ENCODE measurements at regions of chr16 and their contacts with region 1.

Region 1: GRCh38 chr16:88737298-88738150 is 31.2 kb downstream of the CTU2 start:
- DNase-seq: peak; percentile 77
- H3K4me3 ChIP-seq: no peak overlapping the region
- H3K27ac ChIP-seq: no peak overlapping the region
- H3K4me1 ChIP-seq: no peaks in the 10 kb centered on the region
- H3K27me3 ChIP-seq: no peaks in the 10 kb centered on the region
- CTCF ChIP-seq: peak; percentile 94

Region 2: GRCh38 chr16:88706288-88706964 is 31.1 kb before region 1 on chr16 and contains the starts of genes CTU2 and RNF166:
- CTCF ChIA-PET with region 1: interaction called, 18 read pairs
- POLR2A ChIA-PET with region 1: no interaction called
- intact Hi-C with region 1: no loop called
- DNase-seq: peak; percentile 91
- H3K4me3 ChIP-seq: peak within 1 kb of the TSS; percentile 94
- H3K27ac ChIP-seq: peak within 1 kb of the TSS; percentile 76
- H3K4me1 ChIP-seq: peaks cover 30% of the 10 kb centered on the region
- H3K27me3 ChIP-seq: no peaks in the 10 kb centered on the region
- CTCF ChIP-seq: no peak
- total RNA-seq, gene CTU2: 45.0 and 47.5 TPM in 2 replicates
- total RNA-seq, gene RNF166: 32.3 and 36.3 TPM in 2 replicates

Region 3: DNA sequence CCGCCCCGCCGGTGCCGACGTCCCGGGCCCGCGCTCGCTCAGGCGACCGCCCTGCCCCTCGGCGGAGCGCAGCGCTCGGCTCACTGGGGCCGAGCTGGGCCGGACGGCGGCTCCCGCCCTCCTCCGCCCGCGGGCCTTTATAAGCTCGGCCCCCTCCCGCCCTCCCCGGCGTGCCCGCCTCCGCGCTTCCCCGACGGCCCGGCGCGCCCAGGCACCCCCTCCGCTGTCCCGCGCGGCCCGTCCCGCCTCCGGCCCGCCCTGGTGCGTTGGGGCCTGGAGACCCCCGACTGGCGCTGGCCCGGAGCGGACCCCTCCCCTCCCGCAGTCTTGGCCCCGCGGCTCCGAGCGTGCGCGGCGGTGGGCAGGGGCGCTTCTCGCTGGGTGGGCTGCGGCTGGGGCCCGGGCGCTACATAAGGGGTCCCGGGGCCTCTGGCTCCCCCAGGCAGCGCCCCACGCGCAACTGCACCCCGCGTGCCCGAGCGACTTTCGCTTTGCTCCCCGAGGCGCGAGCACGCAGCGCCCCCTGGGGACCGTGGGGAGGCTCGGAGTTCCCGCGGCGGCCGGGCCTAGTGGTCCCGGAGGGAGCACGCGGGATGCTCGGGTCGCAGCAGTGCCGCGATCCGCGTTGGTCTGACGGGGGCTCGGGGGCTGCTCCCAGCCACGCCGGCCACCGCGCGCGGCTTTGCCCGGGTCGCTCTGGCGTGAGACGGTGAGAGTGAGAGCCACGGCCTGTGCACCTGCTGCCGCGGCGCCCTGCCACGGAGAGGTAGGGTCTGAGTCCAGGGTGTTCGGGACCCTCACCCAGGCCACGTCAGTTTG is 47.8 kb after region 1 on chr16 and contains the start of gene PIEZO1:
- CTCF ChIA-PET with region 1: interaction called, 24 read pairs
- POLR2A ChIA-PET with region 1: no interaction called
- intact Hi-C with region 1: loop called (anchors 1 kb)
- DNase-seq: peak; percentile 83
- H3K4me3 ChIP-seq: peak within 1 kb of the TSS; percentile 74
- H3K27ac ChIP-seq: peak within 1 kb of the TSS; percentile 95
- H3K4me1 ChIP-seq: peaks cover 40% of the 10 kb centered on the region
- H3K27me3 ChIP-seq: no peaks in the 10 kb centered on the region
- CTCF ChIP-seq: peak; percentile 79
- total RNA-seq, gene PIEZO1: 174 and 182 TPM in 2 replicates

Region 4: GRCh38 chr16:88830258-88830657 is 92.7 kb after region 1 on chr16:
- CTCF ChIA-PET with region 1: no interaction called
- POLR2A ChIA-PET with region 1: no interaction called
- intact Hi-C with region 1: no loop called
- DNase-seq: no peak
- H3K4me3 ChIP-seq: no peak overlapping the region
- H3K27ac ChIP-seq: no peak overlapping the region
- H3K4me1 ChIP-seq: no peaks in the 10 kb centered on the region
- H3K27me3 ChIP-seq: no peaks in the 10 kb centered on the region
- CTCF ChIP-seq: no peak

Region 5: DNA sequence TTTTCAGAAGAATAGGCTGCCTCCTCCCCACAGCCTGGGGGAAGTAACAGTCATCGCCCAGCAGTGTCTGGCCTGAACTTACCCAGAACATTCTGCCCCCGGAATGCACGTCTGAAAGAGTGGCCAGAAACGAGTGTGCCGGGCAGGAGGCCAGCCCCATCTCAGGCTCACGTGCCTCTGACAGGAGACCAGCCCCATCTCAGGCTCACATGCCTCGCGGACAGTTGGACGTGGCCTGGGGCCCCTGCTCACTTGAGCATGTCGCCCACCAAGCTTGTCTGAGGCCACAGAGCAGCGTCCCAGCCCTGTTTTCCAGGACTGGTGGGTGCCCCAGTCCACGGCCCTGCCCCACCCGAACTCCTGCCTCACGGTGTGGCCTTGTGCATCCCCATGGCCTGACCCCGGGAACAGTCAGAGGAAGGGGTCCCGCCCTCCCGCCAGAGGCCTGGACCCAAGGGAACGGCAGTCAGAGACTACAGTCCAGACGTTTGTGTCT is 417.7 kb after region 1 on chr16:
- CTCF ChIA-PET with region 1: interaction called, 15 read pairs
- POLR2A ChIA-PET with region 1: no interaction called
- intact Hi-C with region 1: no loop called
- DNase-seq: no peak
- H3K4me3 ChIP-seq: no peak overlapping the region
- H3K27ac ChIP-seq: no peak overlapping the region
- H3K4me1 ChIP-seq: no peaks in the 10 kb centered on the region
- H3K27me3 ChIP-seq: no peaks in the 10 kb centered on the region
- CTCF ChIP-seq: no peak

Region 6: DNA sequence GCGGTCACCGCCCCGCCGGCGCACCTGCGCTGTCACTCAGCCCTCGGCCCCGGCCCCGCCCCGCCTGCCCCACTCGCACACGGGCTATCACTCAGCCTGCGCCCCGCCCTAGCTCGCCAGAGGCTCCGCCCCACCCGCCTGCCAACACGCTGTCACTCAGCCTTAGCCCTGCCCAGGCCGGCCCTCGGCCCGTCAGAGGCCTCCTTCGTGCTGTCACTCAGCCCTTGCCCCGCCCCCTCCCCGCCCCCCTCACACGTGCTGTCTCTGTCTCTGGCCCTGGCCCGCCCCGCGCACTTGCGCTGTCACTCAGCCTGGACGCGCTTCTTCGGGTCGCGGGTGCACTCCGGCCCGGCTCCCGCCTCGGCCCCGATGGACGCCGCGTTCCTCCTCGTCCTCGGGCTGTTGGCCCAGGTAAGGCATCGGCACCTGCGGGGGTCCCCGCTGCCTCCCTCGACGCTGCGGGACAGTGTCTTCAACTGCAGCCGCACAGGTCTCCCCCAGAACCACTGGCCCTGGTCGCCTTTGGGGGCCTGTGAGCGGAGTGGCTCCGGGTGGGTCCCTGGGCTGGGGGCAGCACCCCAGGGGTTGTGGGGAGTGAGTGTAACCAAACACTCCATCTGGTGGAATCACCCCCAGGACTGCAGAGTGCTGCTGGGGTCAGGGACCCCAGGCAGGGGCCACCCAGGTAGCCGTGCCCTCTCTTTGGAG is 434.1 kb after region 1 on chr16 and contains the start of gene CDH15:
- CTCF ChIA-PET with region 1: interaction called, 4 read pairs
- POLR2A ChIA-PET with region 1: no interaction called
- intact Hi-C with region 1: loop called (anchors 5 kb)
- DNase-seq: peak; percentile 96
- H3K4me3 ChIP-seq: peak within 1 kb of the TSS; percentile 20
- H3K27ac ChIP-seq: no peak within 1 kb of the TSS
- H3K4me1 ChIP-seq: peaks cover 4% of the 10 kb centered on the region
- H3K27me3 ChIP-seq: no peaks in the 10 kb centered on the region
- CTCF ChIP-seq: no peak
- total RNA-seq, gene CDH15: 0.13 and 0.24 TPM in 2 replicates

Measured in A673 (cell line).